AG04449 (cell line): ENCODE measurements at regions of chr7 and their contacts with region 1.

Region 1: GRCh38 chr7:47600199-47601118 is 18.5 kb upstream of the TNS3 start:
- DNase-seq: no peak
- H3K4me3 ChIP-seq: peak overlapping the region; percentile 16; the same call in 1 of the 2 replicates
- CTCF ChIP-seq: no peak

Region 2: GRCh38 chr7:46468753-46469356 is 1131.6 kb before region 1 on chr7:
- CTCF ChIA-PET with region 1: no interaction called
- POLR2A ChIA-PET with region 1: no interaction called
- DNase-seq: no peak
- H3K4me3 ChIP-seq: no peak overlapping the region
- CTCF ChIP-seq: no peak

Region 3: GRCh38 chr7:47153076-47153475 is 447.4 kb before region 1 on chr7:
- CTCF ChIA-PET with region 1: no interaction called
- POLR2A ChIA-PET with region 1: no interaction called
- DNase-seq: peak; percentile 91
- H3K4me3 ChIP-seq: no peak overlapping the region
- CTCF ChIP-seq: no peak

Region 4: GRCh38 chr7:47610506-47611044 is 10.1 kb after region 1 on chr7:
- CTCF ChIA-PET with region 1: interaction called, 3 read pairs
- POLR2A ChIA-PET with region 1: interaction called, 13 read pairs
- DNase-seq: peak; percentile 86
- H3K4me3 ChIP-seq: no peak overlapping the region
- CTCF ChIP-seq: no peak